ENCODE measurements at regions of chr2 and their contacts with region 1.

Region 1: DNA sequence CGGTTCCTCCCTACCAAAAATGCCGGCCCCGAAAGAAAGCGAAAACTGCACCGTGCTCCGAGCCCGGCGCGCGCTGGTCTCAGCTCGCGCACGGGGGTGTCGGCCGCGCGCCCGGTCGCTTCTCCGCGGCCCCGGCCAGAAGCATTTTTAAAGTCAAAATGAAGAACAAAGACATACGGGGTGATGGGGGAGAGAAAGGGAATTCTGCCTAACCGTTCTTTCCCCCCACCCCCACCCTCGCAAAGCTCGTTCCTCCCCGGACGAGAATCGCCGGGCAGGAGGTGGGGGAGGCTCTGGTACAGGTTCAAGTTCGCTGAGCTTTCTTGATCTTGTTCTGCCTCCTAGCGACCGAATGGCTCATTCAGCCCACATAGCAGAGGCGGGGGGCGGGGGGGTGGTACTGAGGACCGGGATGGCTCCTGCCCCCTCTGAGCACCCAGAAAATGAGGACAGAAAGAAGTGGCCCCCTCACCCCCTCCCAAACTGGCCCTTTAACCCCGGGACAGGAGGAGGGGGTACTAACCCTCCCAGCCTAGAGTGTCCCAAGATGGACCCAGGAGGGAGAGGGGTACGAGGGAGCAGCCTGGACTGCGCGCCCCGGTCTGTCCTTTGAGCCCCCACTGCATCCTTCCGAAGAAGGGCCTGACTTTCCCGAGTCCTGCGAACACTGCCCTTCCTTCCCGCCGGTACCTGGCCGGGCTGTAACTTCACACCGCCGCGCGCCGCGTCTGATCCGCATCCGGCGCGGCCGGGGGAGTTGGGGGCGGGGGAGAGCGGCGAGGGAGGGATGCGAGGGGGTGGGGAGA is 3.1 kb downstream of the BCL11A start:
- DNase-seq: peak; percentile 82
- CTCF ChIP-seq: peak; percentile 94

Region 2: GRCh38 chr2:59025157-59025757 is 1525.1 kb before region 1 on chr2:
- in situ Hi-C with region 1: loop called (anchors 25 kb)
- DNase-seq: peak; percentile 28
- CTCF ChIP-seq: peak; percentile 96

Region 3: DNA sequence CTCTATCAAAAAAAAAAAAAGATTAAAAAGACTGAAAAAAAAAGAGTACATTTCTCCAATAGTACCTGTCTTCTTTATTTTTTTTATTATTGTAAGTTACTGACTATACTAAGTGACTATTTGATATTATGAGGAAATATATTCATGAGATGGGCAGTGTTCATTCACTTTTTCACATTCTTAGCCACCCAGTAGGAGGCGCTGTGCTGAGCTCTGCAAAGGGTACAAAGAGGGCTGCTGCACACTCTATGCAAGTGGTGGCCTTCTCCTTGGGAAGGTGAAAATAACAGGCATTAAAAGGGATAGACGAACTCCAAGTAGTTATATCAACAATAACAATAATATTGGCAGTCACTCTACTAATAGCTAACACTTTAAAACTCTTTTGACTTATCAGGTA is 1274.3 kb before region 1 on chr2:
- in situ Hi-C with region 1: loop called (anchors 25 kb)
- DNase-seq: no peak
- CTCF ChIP-seq: peak; percentile 63

Region 4: DNA sequence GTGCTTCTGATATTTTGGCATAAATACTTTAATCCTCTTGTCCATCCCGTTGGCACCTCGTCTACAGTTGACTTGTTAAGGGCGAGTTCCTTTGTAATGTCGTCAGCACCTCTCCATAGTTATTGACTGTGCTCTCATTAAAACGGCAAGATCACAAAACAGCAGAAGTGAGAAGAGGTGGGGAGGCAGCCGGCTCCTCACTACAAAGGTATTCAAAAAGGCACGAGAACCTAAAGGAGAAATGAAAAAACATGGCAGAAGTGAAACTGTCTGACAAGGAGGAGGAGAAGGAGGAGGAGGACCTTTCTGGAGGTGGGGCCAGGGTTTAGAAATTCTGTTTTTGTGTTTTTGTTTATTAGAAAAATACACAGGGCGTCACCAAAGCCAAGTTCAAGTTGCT is 232.5 kb before region 1 on chr2:
- in situ Hi-C with region 1: no loop called
- DNase-seq: peak; percentile 48
- CTCF ChIP-seq: no peak

Region 5: DNA sequence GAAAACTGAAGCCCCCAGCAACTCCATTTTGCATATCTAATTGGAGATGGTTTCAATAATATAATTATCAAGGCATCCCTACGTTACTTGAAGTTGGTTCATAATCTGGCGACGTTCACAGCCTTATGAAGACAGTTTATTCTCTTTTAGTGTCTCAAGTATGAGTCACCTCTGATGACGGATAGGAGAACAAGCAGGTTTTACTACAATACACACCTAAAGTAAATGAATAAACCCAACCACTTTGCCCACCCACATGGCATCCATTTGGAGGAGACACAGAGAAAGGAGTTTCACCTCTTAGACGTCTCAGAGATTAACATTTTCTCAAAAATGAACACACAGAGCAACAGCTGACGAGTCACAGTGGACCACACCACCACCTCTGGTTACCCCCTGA is 37.7 kb before region 1 on chr2:
- in situ Hi-C with region 1: loop called (anchors 5 kb)
- DNase-seq: no peak
- CTCF ChIP-seq: no peak

Region 6: DNA sequence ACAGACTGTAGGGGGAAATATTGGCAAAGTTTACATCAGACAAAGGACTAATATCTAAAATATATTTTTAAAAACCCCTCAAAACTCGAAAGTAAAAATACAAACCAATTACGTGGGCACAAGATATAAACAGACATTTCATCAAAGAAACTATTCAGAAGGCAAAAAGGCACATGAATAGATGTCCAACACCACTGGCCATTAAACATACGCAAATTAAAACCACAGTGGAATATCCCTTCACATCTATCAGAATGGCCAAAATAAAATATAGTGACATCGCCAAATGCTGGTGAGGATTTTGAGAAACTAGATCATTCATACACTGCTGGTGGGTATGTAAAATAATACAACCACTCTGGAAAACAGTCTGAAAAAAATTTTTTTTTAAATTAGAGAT is 175.1 kb after region 1 on chr2:
- in situ Hi-C with region 1: no loop called
- DNase-seq: no peak
- CTCF ChIP-seq: no peak

Measured in GM13977 (cell line).